AG04450 (cell line): ENCODE measurements at regions of chr10 and their contacts with region 1.

Region 1: DNA sequence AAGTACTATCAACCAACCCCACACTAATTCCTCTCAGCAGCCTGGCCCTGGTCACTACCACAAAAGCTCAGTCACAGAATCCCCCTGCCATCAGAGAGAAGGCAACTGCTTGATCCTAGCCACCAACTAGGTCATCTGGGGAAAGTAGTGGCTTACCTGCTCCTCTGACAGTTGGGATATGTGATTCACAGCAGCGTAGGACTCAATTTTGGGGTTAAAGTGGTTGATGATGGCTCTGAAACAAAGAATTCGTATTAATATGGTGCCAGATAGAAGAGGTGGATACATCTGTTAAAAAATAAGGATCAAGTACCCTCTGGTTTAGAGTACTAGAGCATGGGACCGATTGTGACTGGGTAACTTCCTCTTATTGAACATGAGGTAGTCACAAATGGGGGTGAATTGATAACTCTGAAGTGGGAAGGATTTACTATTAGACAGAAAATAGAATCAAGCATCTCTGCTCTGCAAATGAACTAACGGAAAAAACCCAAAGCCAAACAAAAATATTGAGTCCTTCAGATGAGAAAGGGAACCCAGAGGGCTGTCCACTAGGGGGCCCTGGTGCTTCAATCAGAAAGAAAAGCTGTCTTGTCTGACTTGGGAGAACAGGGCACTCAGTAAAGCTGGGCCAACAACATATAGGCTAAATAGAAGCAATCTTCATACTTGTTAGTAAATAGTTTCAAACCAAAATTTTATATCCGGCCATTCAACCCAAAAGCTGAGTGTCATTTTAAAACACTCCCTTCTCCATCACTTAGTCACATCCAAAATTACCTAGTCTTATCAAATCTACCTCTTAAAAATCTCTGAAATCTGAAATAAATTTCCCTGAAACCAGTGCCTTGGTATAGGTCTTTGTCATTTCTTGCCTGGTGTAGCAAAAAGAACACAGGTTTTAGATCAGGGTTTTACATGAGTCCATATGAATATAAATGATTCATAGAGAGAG is 45.9 kb upstream of the KCNIP2 start:
- DNase-seq: peak; percentile 61
- H3K4me3 ChIP-seq: no peak overlapping the region
- H3K27ac ChIP-seq: no peak overlapping the region
- H3K27me3 ChIP-seq: no peaks in the 10 kb centered on the region
- CTCF ChIP-seq: peak; percentile 97

Region 2: DNA sequence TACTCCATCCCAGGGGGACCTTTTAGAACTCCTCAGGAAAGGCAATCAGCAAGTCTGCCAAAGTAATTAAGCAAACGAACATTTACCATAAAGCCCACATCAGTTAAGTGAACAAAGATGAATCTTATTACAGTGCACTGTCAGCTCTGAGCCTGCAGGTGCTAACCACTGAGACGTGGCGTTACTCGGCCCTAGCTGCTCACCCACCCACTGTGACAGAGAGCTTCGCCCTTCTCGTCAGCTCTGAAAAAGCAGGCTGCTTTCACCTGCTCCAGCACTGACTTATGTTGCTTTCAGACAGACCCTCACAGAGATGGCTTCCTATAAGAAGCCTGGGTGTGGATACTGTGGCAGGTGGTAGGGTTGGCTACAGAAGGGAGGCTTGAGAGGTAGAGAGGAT is 11.8 kb after region 1 on chr10:
- CTCF ChIA-PET with region 1: interaction called, 46 read pairs
- POLR2A ChIA-PET with region 1: no interaction called
- DNase-seq: no peak
- H3K4me3 ChIP-seq: no peak overlapping the region
- H3K27ac ChIP-seq: no peak overlapping the region
- H3K27me3 ChIP-seq: no peaks in the 10 kb centered on the region
- CTCF ChIP-seq: no peak

Region 3: DNA sequence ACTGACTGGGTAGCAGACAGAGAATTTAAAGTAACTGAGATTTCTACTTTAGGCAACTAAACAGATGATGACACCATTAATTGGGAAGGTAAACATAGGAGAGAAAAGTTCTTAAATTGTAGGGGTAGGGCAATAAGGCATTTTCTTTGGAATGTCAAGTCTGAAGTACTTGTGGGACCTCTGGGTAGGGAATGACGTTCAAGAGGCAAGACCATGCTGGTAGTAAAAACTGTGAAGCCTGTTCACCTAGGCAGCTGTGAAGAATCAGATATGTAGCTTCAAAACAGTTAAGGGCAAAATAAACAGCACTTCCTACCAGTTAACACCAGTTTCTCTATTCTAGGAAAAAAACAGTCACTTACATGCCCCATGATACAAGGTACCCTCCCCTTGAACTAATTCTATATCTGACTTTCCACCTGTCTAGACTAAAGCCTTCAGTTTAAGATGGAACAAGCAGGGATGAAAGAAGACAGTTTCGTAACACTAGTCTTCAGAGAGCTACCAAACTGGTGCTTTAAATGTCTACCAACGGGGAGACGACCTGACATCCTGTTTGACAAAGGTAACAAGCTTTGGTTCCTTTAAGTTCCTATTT is 17.2 kb after region 1 on chr10:
- CTCF ChIA-PET with region 1: interaction called, 10 read pairs
- POLR2A ChIA-PET with region 1: no interaction called
- DNase-seq: no peak
- H3K4me3 ChIP-seq: no peak overlapping the region
- H3K27ac ChIP-seq: no peak overlapping the region
- H3K27me3 ChIP-seq: no peaks in the 10 kb centered on the region
- CTCF ChIP-seq: no peak

Region 4: DNA sequence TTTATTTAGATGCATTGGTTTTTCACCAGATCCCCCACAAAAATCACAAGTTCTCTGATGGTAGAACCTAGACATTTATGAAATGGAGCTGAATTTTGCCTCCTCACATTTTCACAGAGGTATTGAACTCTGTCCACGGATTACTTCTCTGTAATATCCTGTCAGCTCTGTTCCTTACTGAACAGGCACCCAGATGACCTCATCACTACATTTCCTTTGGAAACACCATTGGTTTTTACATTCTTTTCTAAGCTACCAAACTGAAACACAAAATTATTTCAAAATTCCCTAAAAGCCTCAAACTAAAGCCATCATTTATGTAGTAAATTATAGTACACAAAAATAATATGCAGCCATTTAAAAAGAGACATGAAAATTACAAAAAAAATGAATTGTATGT is 52.3 kb after region 1 on chr10:
- CTCF ChIA-PET with region 1: interaction called, 11 read pairs
- POLR2A ChIA-PET with region 1: no interaction called
- DNase-seq: no peak
- H3K4me3 ChIP-seq: no peak overlapping the region
- H3K27ac ChIP-seq: no peak overlapping the region
- H3K27me3 ChIP-seq: no peaks in the 10 kb centered on the region
- CTCF ChIP-seq: no peak

Region 5: DNA sequence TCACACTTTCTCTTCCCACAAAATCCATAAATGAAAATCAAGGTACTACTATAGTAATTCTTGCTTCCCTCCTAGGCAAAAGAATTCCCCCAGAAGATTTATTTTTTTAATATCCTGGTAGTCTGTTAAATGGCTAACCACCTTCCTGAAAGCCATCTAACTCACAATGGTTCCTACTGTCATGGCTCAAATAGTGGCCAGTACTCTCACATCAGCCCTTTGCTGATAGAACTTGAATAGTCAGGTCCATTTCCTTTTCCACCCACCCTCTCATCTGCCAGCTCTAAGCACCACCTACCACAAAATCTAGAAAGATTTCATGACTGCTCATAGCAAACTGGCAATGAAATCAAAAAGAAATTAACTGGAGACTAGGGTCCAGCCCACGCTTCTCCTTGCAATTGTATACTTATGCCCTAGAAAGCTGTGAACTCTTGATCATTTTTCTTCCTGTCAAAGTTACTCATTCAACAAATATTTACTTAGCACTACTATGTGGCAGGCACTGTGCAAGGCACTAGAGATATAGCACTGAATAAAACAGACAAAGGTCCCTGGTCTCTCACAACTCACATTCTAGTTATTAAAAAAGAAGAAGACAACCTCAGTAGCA is 106.0 kb after region 1 on chr10:
- CTCF ChIA-PET with region 1: interaction called, 16 read pairs
- POLR2A ChIA-PET with region 1: no interaction called
- DNase-seq: no peak
- H3K4me3 ChIP-seq: no peak overlapping the region
- H3K27ac ChIP-seq: peak overlapping the region; percentile 25
- H3K27me3 ChIP-seq: no peaks in the 10 kb centered on the region
- CTCF ChIP-seq: no peak

Region 6: DNA sequence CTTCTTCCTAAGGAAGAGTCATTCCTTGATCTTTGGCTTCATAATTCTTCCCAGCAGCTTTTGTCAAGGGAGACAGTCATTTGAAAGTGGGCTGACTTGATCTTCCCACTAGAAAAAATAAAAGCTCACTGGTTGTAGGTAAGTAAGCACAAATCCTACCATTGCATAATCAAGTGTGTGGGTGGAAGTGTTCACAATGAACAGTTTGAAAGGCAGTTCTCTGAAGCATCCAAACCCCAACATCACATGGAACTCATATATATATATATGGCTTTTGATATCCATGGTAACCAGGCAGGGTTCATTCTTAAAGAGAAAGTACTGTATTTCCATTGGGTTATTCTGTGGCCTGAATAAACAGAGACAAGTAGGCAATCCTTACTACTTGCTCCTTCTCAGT is 114.8 kb after region 1 on chr10:
- CTCF ChIA-PET with region 1: interaction called, 244 read pairs
- POLR2A ChIA-PET with region 1: no interaction called
- DNase-seq: peak; percentile 24
- H3K4me3 ChIP-seq: no peak overlapping the region
- H3K27ac ChIP-seq: no peak overlapping the region
- H3K27me3 ChIP-seq: no peaks in the 10 kb centered on the region
- CTCF ChIP-seq: no peak